OCI-LY7 (cell line): ENCODE measurements at regions of chr5 and their contacts with region 1.

Region 1: GRCh38 chr5:79025054-79025472 is 40.0 kb upstream of the ARSB start:
- DNase-seq: peak; percentile 59
- H3K4me3 ChIP-seq: no peak overlapping the region
- H3K27ac ChIP-seq: no peak overlapping the region
- H3K4me1 ChIP-seq: no peaks in the 10 kb centered on the region
- CTCF ChIP-seq: peak; percentile 100

Region 2: DNA sequence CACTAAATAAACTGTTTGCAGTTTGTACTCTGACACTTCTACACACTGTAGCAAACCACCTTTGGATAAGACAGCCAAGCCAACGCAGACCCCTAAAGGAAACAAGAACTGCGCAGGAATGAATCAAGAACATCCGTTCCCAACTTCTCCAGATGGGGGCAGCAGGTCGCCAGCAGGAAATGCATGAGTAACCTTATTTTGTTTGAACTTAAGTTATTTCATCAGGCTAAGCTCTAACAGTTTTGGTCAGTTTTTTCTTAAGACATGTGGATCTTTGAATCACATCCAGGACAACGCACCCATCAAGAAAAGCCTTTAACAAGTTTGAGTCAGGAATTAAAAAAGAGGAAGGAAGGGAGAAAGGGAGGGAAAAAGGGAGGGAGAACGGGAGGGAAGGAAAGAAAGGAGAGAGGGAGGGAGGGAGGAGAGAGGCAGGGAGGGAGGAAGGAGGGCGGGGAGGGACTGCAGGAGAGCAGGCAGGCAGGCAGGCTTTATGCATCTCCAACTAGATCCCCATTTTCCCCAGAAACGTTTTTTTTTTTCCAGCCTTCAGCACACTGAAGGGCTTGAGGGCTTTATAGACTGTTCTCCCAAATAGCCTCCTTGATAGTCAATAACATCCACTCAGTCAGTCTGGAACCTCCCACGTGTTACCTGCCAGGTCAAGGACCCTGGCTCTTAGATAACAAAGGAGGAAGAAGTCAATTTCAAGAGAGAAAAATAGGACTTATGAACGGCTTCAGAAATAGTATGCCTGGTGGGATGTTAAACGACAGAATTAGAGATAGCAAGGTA is 108.8 kb after region 1 on chr5:
- CTCF ChIA-PET with region 1: interaction called, 9 read pairs
- POLR2A ChIA-PET with region 1: interaction called, 5 read pairs
- intact Hi-C with region 1: loop called (anchors 1 kb)
- DNase-seq: peak; percentile 81
- H3K4me3 ChIP-seq: peak overlapping the region; percentile 6
- H3K27ac ChIP-seq: no peak overlapping the region
- H3K4me1 ChIP-seq: peaks cover 10% of the 10 kb centered on the region
- CTCF ChIP-seq: peak; percentile 81